GM12878 (cell line): ENCODE measurements at regions of chr2 and their contacts with region 1.

Region 1: DNA sequence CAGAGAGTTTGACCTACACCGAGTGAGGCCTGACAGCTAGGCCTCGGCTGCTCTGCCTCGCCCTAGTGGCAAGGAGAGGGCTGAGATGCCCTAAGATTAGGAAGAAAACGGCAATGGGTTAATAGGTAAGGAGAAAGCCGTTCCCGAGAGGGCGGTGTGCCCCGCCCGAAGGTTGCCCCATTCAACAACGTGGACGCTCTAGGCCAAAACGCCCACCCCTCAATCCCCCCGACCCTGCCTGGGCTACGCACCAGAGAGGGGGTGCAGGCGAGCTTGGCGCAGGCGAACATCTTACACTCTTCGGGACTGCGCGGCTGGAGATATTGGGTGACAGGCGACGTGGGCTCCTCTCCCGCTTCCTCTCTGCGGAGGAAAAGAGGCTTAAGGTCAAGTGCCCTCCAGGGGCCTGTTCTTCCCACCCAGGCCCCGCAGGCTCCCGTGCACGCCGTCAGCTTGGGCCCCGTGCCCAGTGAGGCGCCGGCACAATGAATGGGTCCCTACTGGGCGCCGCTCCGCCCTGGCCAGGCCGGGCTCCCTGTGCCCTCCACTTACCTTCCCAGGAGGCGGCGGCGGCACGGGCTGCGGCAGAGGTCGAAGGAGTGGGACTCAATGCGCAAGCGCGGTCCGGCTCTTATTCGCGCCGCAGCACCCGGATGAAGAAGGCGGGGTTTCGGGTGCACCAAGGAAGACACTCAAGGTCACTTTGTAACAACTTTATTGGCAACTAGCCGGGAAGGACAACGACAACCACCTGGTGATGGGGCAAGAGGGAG is at the start of gene ATP5MC3:
- DNase-seq: peak; percentile 91
- ATAC-seq: peak; percentile 93
- H3K4me3 ChIP-seq: peak within 1 kb of the TSS; percentile 83
- H3K27ac ChIP-seq: peak within 1 kb of the TSS; percentile 69
- H3K4me1 ChIP-seq: no peaks in the 10 kb centered on the region
- H3K27me3 ChIP-seq: no peaks in the 10 kb centered on the region
- CTCF ChIP-seq: peak in 2 of 3 experiments; percentile 23 to 25; a peak in 2 of 6 replicates
- EP300 ChIP-seq: no peak
- POLR2A ChIP-seq: peak; percentile 94
- RAD21 ChIP-seq: no peak
- polyA plus RNA-seq, gene ATP5MC3: 643 to 716 TPM

Region 2: GRCh38 chr2:175103191-175103590 is 78.1 kb before region 1 on chr2:
- CTCF ChIA-PET with region 1: no interaction called
- POLR2A ChIA-PET with region 1: interaction called, 5 read pairs
- RAD21 ChIA-PET with region 1: no interaction called
- SMC1A ChIA-PET with region 1: interaction called, 10 read pairs
- in situ Hi-C with region 1: no loop called
- intact Hi-C with region 1: no loop called
- DNase-seq: no peak
- ATAC-seq: no peak
- H3K4me3 ChIP-seq: no peak overlapping the region
- H3K27ac ChIP-seq: no peak overlapping the region
- H3K4me1 ChIP-seq: no peaks in the 10 kb centered on the region
- H3K27me3 ChIP-seq: no peaks in the 10 kb centered on the region
- CTCF ChIP-seq: no peak
- EP300 ChIP-seq: no peak
- POLR2A ChIP-seq: no peak
- RAD21 ChIP-seq: no peak

Region 3: DNA sequence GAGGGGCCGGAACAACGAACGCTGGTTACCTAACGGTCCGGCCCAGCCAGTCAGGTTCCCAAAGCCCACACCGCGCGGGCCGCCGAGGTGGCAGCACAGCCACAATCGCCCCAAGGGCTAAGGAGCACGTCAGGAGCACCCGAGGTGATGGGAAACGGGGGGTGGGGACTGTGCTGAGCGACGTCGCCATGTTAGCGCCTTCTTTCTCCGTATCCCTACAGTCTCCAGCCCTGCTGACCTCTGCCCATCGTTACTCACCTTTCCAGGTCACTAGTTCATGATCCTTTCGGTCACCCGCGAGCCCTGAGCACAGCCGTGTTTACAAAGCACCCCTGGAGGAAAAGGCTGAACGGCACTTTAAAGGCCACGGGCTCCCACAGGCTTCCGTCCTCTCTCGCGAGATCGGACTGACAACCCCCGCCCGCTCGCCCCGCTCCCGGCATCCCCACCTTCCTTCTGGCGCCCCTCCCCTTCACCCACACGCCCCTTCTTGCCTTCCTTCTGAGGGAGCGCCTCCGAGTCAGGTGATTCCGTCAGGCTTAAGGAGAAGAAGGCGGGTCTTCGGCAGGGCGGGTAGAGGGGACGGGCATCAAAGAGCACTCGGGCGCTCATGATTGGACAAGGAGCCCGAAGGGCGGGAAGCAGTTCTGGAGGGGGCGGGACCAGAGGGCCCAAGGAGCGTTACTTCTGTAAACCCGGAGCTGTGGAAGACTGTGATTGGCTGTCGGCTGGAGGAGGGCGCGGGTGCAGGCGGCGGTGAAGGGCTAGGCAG is 13.3 kb before region 1 on chr2 and contains the start of gene ATF2:
- CTCF ChIA-PET with region 1: interaction called, 12 read pairs
- POLR2A ChIA-PET with region 1: interaction called, 22 read pairs
- RAD21 ChIA-PET with region 1: interaction called, 10 read pairs
- SMC1A ChIA-PET with region 1: interaction called, 22 read pairs
- in situ Hi-C with region 1: no loop called
- intact Hi-C with region 1: loop called (anchors 1 kb)
- DNase-seq: peak; percentile 97
- ATAC-seq: peak; percentile 96
- H3K4me3 ChIP-seq: peak within 1 kb of the TSS; percentile 93
- H3K27ac ChIP-seq: peak within 1 kb of the TSS; percentile 95
- H3K4me1 ChIP-seq: peaks cover 3% of the 10 kb centered on the region; the same call in 1 of the 2 replicates
- H3K27me3 ChIP-seq: no peaks in the 10 kb centered on the region
- CTCF ChIP-seq: no peak
- EP300 ChIP-seq: no peak
- POLR2A ChIP-seq: peak; percentile 91
- RAD21 ChIP-seq: no peak
- polyA plus RNA-seq, gene ATF2: 10.3 to 17.7 TPM

Region 4: DNA sequence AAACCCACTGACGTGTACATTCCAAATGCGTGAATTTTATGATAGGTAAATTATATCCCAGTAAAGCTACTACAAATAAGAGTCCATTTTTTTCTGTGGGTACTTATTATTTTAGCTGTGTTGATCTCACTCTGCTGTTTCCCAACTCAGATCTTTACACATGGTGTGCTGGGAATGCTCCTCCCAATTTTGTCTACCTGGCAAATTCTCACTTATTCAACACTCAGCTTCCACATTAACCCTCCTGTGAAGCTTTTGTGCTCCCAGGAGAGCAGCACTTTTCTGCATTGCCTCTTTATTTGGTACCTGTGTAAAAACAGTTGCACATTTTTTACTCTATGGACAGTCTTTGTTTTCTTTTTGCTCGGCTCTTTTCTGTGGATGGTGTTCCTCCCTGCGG is 38.8 kb after region 1 on chr2:
- CTCF ChIA-PET with region 1: no interaction called
- POLR2A ChIA-PET with region 1: no interaction called
- RAD21 ChIA-PET with region 1: no interaction called
- SMC1A ChIA-PET with region 1: no interaction called
- in situ Hi-C with region 1: no loop called
- intact Hi-C with region 1: no loop called
- DNase-seq: no peak
- ATAC-seq: no peak
- H3K4me3 ChIP-seq: no peak overlapping the region
- H3K27ac ChIP-seq: no peak overlapping the region
- H3K4me1 ChIP-seq: no peaks in the 10 kb centered on the region
- H3K27me3 ChIP-seq: no peaks in the 10 kb centered on the region
- CTCF ChIP-seq: no peak
- EP300 ChIP-seq: no peak
- POLR2A ChIP-seq: no peak
- RAD21 ChIP-seq: no peak